ENCODE measurements at regions of chr12 and their contacts with region 1.

Region 1: GRCh38 chr12:116880817-116881324 is 370 bp downstream of the HRK start:
- DNase-seq: peak; percentile 38 to 75
- H3K4me3 ChIP-seq: peak overlapping the region; percentile 46 to 89 (median 62)
- H3K27ac ChIP-seq: no peak overlapping the region
- H3K4me1 ChIP-seq: peaks cover 6 to 26% (median 12%) of the 10 kb centered on the region in 4 experiments
- H3K27me3 ChIP-seq: peaks cover 43 to 64% (median 57%) of the 10 kb centered on the region in 4 experiments
- CTCF ChIP-seq: peak in 1 of 3 experiments; percentile 28; a peak in 2 of 4 replicates
- EP300 ChIP-seq: no peak
- POLR2A ChIP-seq: peak in 1 of 2 experiments; percentile 42; a peak in 1 of 3 replicates
- RAD21 ChIP-seq: peak in 1 of 2 experiments; percentile 8; a peak in 1 of 4 replicates

Region 2: GRCh38 chr12:116703214-116703795 is 177.6 kb before region 1 on chr12:
- CTCF ChIA-PET with region 1: interaction called, 12 read pairs
- POLR2A ChIA-PET with region 1: interaction called, 3 read pairs
- DNase-seq: peak; percentile 64 to 84
- H3K4me3 ChIP-seq: no peak overlapping the region
- H3K27ac ChIP-seq: no peak overlapping the region
- H3K4me1 ChIP-seq: no peaks in the 10 kb centered on the region
- H3K27me3 ChIP-seq: no peaks in the 10 kb centered on the region
- CTCF ChIP-seq: peak; percentile 92 to 93 (median 92)
- EP300 ChIP-seq: no peak
- POLR2A ChIP-seq: no peak
- RAD21 ChIP-seq: peak; percentile 94 to 97

Region 3: GRCh38 chr12:116910645-116911451 is 30.0 kb after region 1 on chr12 and contains the start of gene FBXW8:
- CTCF ChIA-PET with region 1: interaction called, 3 read pairs
- POLR2A ChIA-PET with region 1: interaction called, 17 read pairs
- DNase-seq: peak in 1 of 2 experiments; percentile 87
- H3K4me3 ChIP-seq: peak within 1 kb of the TSS; percentile 55 to 65 (median 63)
- H3K27ac ChIP-seq: peak within 1 kb of the TSS; percentile 39; the same call in 1 of the 2 replicates
- H3K4me1 ChIP-seq: no peaks in the 10 kb centered on the region; a peak in 1 of 7 replicates
- H3K27me3 ChIP-seq: no peaks in the 10 kb centered on the region
- CTCF ChIP-seq: no peak
- EP300 ChIP-seq: no peak
- POLR2A ChIP-seq: peak; percentile 17 to 46; a peak in 2 of 3 replicates
- RAD21 ChIP-seq: no peak
- total RNA-seq, gene FBXW8: 15.9 and 16.0 TPM in 2 replicates

Region 4: GRCh38 chr12:116926283-116927243 is 45.7 kb after region 1 on chr12:
- CTCF ChIA-PET with region 1: no interaction called
- POLR2A ChIA-PET with region 1: no interaction called
- DNase-seq: no peak
- H3K4me3 ChIP-seq: no peak overlapping the region
- H3K27ac ChIP-seq: no peak overlapping the region
- H3K4me1 ChIP-seq: peaks cover 0 to 3% (median 0%) of the 10 kb centered on the region in 4 experiments; a peak in 1 of 7 replicates
- H3K27me3 ChIP-seq: no peaks in the 10 kb centered on the region
- CTCF ChIP-seq: no peak
- EP300 ChIP-seq: no peak
- POLR2A ChIP-seq: no peak
- RAD21 ChIP-seq: 0 out of 4 replicates have a peak, but pooled peaks of 1 of the 2 experiments have one; percentile 9